GM12878 (cell line): ENCODE measurements at regions of chr16 and their contacts with region 1.

Region 1: GRCh38 chr16:17301593-17302135 is 169.1 kb downstream of the XYLT1 start:
- DNase-seq: peak; percentile 98
- ATAC-seq: peak; percentile 91
- H3K4me3 ChIP-seq: no peak overlapping the region
- H3K27ac ChIP-seq: no peak overlapping the region; the same call in none of the 2 replicates
- H3K4me1 ChIP-seq: peaks cover 44% of the 10 kb centered on the region
- H3K27me3 ChIP-seq: no peaks in the 10 kb centered on the region
- CTCF ChIP-seq: no peak
- EP300 ChIP-seq: peak; percentile 87 to 97
- POLR2A ChIP-seq: no peak
- RAD21 ChIP-seq: peak; percentile 5; the same call in 1 of the 2 replicates

Region 2: GRCh38 chr16:17026600-17027242 is 274.9 kb before region 1 on chr16:
- CTCF ChIA-PET with region 1: no interaction called
- POLR2A ChIA-PET with region 1: interaction called, 3 read pairs
- RAD21 ChIA-PET with region 1: interaction called, 5 read pairs
- SMC1A ChIA-PET with region 1: interaction called, 3 read pairs
- in situ Hi-C with region 1: no loop called
- intact Hi-C with region 1: loop called (anchors 5 kb)
- DNase-seq: peak; percentile 92
- ATAC-seq: peak; percentile 83
- H3K4me3 ChIP-seq: peak overlapping the region; percentile 19; the same call in 1 of the 2 replicates
- H3K27ac ChIP-seq: peak overlapping the region; percentile 96
- H3K4me1 ChIP-seq: peaks cover 40% of the 10 kb centered on the region
- H3K27me3 ChIP-seq: no peaks in the 10 kb centered on the region
- CTCF ChIP-seq: no peak
- EP300 ChIP-seq: peak; percentile 91 to 97
- POLR2A ChIP-seq: no peak
- RAD21 ChIP-seq: peak; percentile 36

Region 3: DNA sequence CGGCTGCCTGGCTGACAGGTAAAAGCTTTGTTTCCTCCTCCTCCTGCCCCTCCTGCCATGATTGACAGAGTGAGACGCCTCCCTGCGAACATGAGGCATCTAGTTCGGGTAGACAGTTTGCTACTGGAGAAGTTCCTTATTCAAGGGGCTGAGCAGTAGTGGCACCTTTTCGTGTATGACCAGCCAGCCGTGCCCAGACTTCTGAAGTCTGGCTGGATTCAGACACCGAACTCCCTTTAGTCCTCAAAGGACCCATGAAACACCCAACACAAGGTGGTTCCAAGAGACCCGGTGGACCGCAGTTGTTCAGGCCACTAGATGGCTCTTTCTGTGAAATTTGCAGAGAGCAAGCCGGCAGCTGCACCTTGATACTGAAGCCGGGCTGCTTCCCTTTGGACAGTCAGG is 23.7 kb before region 1 on chr16:
- CTCF ChIA-PET with region 1: interaction called, 54 read pairs
- POLR2A ChIA-PET with region 1: interaction called, 32 read pairs
- RAD21 ChIA-PET with region 1: interaction called, 67 read pairs
- SMC1A ChIA-PET with region 1: interaction called, 241 read pairs
- in situ Hi-C with region 1: no loop called
- intact Hi-C with region 1: no loop called
- DNase-seq: no peak
- ATAC-seq: peak; percentile 77
- H3K4me3 ChIP-seq: no peak overlapping the region
- H3K27ac ChIP-seq: no peak overlapping the region
- H3K4me1 ChIP-seq: peaks cover 39% of the 10 kb centered on the region
- H3K27me3 ChIP-seq: no peaks in the 10 kb centered on the region
- CTCF ChIP-seq: peak; percentile 59 to 66 (median 62); a peak in 5 of 6 replicates
- EP300 ChIP-seq: no peak
- POLR2A ChIP-seq: no peak
- RAD21 ChIP-seq: peak; percentile 70

Region 4: GRCh38 chr16:17343028-17343427 is 41.4 kb after region 1 on chr16:
- CTCF ChIA-PET with region 1: interaction called, 18 read pairs
- POLR2A ChIA-PET with region 1: interaction called, 9 read pairs
- RAD21 ChIA-PET with region 1: interaction called, 38 read pairs
- SMC1A ChIA-PET with region 1: interaction called, 58 read pairs
- in situ Hi-C with region 1: no loop called
- intact Hi-C with region 1: loop called (anchors 2 kb)
- DNase-seq: peak; percentile 63
- ATAC-seq: peak; percentile 81
- H3K4me3 ChIP-seq: no peak overlapping the region
- H3K27ac ChIP-seq: peak overlapping the region; percentile 52
- H3K4me1 ChIP-seq: peaks cover 68% of the 10 kb centered on the region
- H3K27me3 ChIP-seq: no peaks in the 10 kb centered on the region
- CTCF ChIP-seq: no peak
- EP300 ChIP-seq: peak; percentile 88 to 96
- POLR2A ChIP-seq: peak; percentile 19; the same call in 1 of the 2 replicates
- RAD21 ChIP-seq: peak; percentile 25; the same call in 1 of the 2 replicates

Region 5: DNA sequence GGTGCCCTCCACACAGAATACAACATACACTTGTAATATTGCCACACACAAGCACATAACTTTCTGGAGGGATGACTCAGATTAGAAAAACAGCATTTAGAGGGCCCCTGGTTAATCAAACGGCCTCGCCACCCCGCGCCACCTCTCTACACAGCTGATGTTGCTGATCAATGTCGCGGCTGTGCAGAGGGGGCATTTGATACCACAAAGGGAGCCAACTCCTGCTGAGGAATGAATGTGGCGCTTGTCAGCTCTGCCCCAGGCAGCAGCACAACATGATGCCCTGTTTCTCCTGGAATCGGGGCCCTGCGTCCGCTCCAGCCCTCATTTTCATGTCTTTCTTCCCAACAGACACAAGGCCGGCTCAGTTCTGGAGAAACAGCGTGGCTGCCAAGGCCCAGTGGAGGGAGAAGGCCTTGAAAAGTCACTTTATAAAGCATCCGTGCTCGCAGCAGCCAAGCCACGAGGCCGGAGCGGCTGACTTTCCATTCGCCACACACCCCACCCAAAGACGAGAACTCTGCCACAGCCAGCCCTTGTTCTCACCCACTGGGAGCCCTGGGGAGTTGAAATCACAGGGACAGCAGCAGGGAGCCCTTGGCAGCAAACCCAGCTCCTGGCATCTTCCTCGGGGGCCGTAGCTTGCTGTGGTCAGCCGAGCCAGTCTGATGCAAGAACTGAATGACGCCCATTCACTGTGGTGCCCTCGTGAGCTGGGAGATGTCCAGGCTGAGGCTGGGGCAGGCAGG is 103.5 kb after region 1 on chr16:
- CTCF ChIA-PET with region 1: no interaction called
- POLR2A ChIA-PET with region 1: no interaction called
- RAD21 ChIA-PET with region 1: interaction called, 5 read pairs
- SMC1A ChIA-PET with region 1: interaction called, 7 read pairs
- in situ Hi-C with region 1: no loop called
- intact Hi-C with region 1: loop called (anchors 5 kb)
- DNase-seq: no peak
- ATAC-seq: no peak
- H3K4me3 ChIP-seq: no peak overlapping the region
- H3K27ac ChIP-seq: no peak overlapping the region
- H3K4me1 ChIP-seq: peaks cover 24% of the 10 kb centered on the region
- H3K27me3 ChIP-seq: no peaks in the 10 kb centered on the region
- CTCF ChIP-seq: no peak
- EP300 ChIP-seq: no peak
- POLR2A ChIP-seq: no peak
- RAD21 ChIP-seq: no peak

Region 6: GRCh38 chr16:17529982-17530765 is 228.5 kb after region 1 on chr16:
- CTCF ChIA-PET with region 1: no interaction called
- POLR2A ChIA-PET with region 1: no interaction called
- RAD21 ChIA-PET with region 1: no interaction called
- SMC1A ChIA-PET with region 1: no interaction called
- in situ Hi-C with region 1: no loop called
- intact Hi-C with region 1: loop called (anchors 10 kb)
- DNase-seq: peak; percentile 51
- ATAC-seq: peak; percentile 85
- H3K4me3 ChIP-seq: peak overlapping the region; percentile 41; the same call in 1 of the 2 replicates
- H3K27ac ChIP-seq: peak overlapping the region; percentile 13; the same call in 1 of the 2 replicates
- H3K4me1 ChIP-seq: peaks cover 33% of the 10 kb centered on the region
- H3K27me3 ChIP-seq: no peaks in the 10 kb centered on the region
- CTCF ChIP-seq: no peak
- EP300 ChIP-seq: no peak
- POLR2A ChIP-seq: no peak
- RAD21 ChIP-seq: no peak